A549 (cell line): ENCODE measurements at regions of chr10 and their contacts with region 1.

Region 1: DNA sequence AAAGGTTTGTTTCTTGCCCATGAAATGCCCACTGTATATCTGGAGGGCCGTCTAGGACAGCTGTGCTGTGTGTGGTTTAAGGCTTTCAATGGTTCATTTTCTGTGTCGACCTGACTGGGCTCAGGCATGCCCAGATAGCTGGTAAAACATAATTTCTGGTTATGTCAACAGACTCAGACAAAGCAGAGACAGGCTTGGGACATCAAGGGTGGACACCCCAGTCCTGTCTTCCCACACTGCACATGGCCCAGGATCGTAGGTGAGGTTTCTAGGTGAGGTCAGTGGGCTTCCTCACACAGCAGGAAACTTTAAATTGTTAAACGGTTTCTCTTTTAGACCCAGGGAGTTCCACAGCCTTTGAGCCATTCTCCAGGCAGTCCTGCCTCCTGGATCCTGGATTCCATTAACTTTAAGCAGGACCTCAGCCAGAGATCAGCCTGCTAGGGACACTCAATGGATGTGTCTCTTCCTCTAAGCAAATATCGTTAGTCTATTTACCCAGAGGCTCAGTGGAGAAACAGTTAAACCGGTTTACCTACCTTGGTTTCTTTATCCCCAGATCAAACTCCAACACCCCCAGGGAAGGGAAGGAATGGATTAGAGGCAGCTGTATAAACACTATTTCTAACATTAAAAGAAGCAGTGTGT is 66.4 kb downstream of the ST8SIA6 start:
- DNase-seq: no peak
- ATAC-seq: no peak; a peak in 2 of 6 replicates
- H3K4me3 ChIP-seq: no peak overlapping the region
- H3K27ac ChIP-seq: no peak overlapping the region
- H3K4me1 ChIP-seq: no peaks in the 10 kb centered on the region
- CTCF ChIP-seq: no peak
- EP300 ChIP-seq: no peak
- POLR2A ChIP-seq: no peak
- RAD21 ChIP-seq: no peak

Region 2: DNA sequence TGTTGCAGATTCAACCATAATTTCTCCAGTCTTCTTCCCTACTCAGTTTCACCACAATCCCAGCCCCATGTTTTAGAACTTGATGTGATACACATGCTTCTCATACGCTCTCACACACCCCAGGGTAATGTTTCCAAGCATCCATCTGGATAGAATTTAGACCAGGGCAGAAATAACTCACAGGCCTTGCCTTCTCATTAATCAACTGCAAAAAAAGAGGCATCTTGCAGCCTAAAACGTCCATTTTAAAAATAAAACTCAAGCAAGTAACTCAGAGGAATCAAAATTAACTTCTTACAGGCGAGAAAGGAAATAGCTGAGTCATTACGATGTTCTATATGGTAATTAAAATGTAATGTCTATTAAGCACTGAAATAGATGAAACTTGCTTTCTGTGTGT is 443.6 kb before region 1 on chr10:
- CTCF ChIA-PET with region 1: no interaction called
- POLR2A ChIA-PET with region 1: no interaction called
- DNase-seq: no peak
- ATAC-seq: no peak
- H3K4me3 ChIP-seq: no peak overlapping the region
- H3K27ac ChIP-seq: 0 out of 6 replicates have a peak overlapping the region, but pooled peaks of 1 of the 2 experiments have one; percentile 19
- H3K4me1 ChIP-seq: no peaks in the 10 kb centered on the region
- CTCF ChIP-seq: no peak
- EP300 ChIP-seq: no peak
- POLR2A ChIP-seq: no peak
- RAD21 ChIP-seq: no peak

Region 3: GRCh38 chr10:17316488-17317170 is 71.4 kb before region 1 on chr10:
- CTCF ChIA-PET with region 1: no interaction called
- POLR2A ChIA-PET with region 1: no interaction called
- DNase-seq: no peak
- ATAC-seq: no peak
- H3K4me3 ChIP-seq: no peak overlapping the region
- H3K27ac ChIP-seq: no peak overlapping the region
- H3K4me1 ChIP-seq: no peaks in the 10 kb centered on the region
- CTCF ChIP-seq: no peak
- EP300 ChIP-seq: no peak
- POLR2A ChIP-seq: no peak
- RAD21 ChIP-seq: no peak

Region 4: DNA sequence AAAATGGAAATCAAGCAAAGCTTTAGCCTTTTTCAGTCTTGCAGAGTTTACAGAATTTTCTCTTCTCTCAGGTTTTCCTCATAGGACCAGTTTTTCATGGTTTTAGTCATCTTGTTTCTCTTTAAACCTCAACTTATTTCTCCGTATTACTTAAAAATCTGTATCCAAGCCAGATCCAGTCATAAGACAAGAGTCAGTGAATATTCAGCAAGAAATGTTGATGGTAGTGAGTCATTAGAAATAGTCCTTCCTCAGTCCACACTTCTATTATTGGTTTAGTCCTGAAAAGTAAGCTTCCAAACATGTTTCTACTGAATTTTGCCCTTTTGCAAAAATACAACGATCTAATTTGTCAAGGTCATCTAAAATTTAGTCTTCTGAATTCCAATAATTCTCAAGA is 52.9 kb before region 1 on chr10:
- CTCF ChIA-PET with region 1: no interaction called
- POLR2A ChIA-PET with region 1: interaction called, 10 read pairs
- DNase-seq: no peak
- ATAC-seq: no peak
- H3K4me3 ChIP-seq: no peak overlapping the region
- H3K27ac ChIP-seq: no peak overlapping the region
- H3K4me1 ChIP-seq: no peaks in the 10 kb centered on the region
- CTCF ChIP-seq: no peak
- EP300 ChIP-seq: no peak
- POLR2A ChIP-seq: no peak
- RAD21 ChIP-seq: no peak

Region 5: DNA sequence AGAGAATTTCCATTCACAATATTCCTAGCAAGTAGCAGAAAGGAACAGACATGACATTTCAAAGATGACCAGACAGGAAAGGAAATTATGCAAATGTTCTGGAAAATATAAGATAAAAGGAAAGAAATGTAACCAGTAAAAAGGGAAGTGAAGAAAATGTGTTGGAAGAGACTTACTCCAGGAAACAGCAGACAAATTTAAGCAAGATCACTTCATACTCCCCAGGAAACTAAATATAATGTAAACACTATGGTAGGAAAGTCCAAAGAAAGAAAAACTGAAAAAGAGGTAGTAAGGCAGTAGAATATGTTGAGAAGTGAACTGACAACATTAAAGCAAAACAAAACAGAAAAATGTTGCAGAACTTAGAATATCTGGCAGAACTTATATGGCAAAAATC is 72.8 kb after region 1 on chr10:
- CTCF ChIA-PET with region 1: no interaction called
- POLR2A ChIA-PET with region 1: no interaction called
- DNase-seq: no peak
- ATAC-seq: no peak
- H3K4me3 ChIP-seq: no peak overlapping the region
- H3K27ac ChIP-seq: no peak overlapping the region
- H3K4me1 ChIP-seq: no peaks in the 10 kb centered on the region
- CTCF ChIP-seq: no peak
- EP300 ChIP-seq: no peak
- POLR2A ChIP-seq: no peak
- RAD21 ChIP-seq: no peak